OCI-LY7 (cell line): ENCODE measurements at regions of chr11 and their contacts with region 1.

Region 1: DNA sequence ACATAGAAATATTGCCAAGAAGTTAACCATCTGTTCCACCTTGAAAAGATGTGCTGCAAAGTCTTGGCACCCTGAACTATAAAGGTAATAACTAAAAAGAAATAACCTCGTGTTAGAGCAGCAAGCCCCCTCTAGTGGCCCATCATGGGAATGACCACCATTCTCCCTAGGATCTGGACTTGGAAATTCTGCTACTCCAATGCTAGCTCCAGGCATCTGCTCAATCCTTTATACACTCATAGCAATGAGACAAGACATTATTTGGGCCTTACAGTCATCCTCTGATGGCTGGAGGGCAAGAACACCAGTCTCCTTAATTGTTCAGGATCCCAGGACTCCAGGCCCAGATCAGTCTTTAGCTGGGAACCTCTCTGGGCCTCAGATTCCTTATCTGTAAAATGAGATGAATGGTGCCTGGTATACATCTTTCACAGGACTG is 76.0 kb downstream of the CWC15 start:
- DNase-seq: peak; percentile 36
- H3K4me3 ChIP-seq: no peak overlapping the region
- H3K27ac ChIP-seq: no peak overlapping the region
- H3K4me1 ChIP-seq: no peaks in the 10 kb centered on the region
- CTCF ChIP-seq: peak; percentile 90

Region 2: GRCh38 chr11:94519478-94520084 is 377.8 kb before region 1 on chr11:
- CTCF ChIA-PET with region 1: no interaction called
- POLR2A ChIA-PET with region 1: no interaction called
- intact Hi-C with region 1: loop called (anchors 2 kb)
- DNase-seq: peak; percentile 56
- H3K4me3 ChIP-seq: no peak overlapping the region
- H3K27ac ChIP-seq: no peak overlapping the region
- H3K4me1 ChIP-seq: no peaks in the 10 kb centered on the region
- CTCF ChIP-seq: peak; percentile 94

Region 3: GRCh38 chr11:94623120-94623735 is 274.1 kb before region 1 on chr11:
- CTCF ChIA-PET with region 1: no interaction called
- POLR2A ChIA-PET with region 1: no interaction called
- intact Hi-C with region 1: loop called (anchors 1 kb)
- DNase-seq: peak; percentile 63
- H3K4me3 ChIP-seq: no peak overlapping the region
- H3K27ac ChIP-seq: no peak overlapping the region
- H3K4me1 ChIP-seq: no peaks in the 10 kb centered on the region
- CTCF ChIP-seq: peak; percentile 79

Region 4: DNA sequence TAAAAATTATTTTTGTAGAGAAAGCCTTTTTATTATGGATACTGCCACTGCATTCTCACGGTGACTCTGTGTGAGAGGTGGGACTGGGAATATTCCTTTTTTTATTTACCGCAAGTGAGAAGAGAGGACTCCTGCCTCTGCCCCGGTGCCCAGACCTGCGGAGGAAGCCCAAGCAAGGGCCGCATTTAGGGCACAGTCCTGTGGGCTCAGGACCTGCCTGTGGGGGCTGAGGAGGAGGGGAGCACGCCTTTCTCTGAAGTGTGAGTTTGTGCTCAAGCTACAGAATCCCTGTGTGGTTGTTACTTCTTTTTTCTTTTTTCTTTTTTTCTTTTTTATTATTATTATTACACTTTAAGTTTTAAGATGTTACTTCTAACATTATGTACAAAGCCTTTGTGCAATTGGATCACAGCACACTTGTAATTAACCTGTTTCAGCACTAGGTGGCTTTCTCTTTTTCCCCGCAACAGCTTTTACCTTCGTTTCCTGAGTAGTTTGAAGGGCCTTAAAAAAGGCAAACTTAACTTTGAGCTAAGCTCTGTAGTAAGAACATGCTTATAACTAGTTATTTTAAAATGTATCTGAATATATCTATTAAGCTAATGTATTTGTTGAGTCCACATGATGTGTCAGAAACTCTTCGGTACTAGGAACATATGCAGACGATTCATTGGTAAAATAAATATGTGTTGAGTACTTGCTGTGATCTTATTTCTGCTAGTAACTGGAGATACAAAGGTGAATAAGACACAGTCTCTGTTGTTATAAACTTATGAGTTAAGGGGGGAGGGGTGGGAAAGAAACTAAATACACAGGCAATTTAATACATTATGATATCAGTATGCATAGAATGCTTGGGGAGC is 110.9 kb before region 1 on chr11:
- CTCF ChIA-PET with region 1: no interaction called
- POLR2A ChIA-PET with region 1: interaction called, 3 read pairs
- intact Hi-C with region 1: loop called (anchors 5 kb)
- DNase-seq: peak; percentile 20
- H3K4me3 ChIP-seq: no peak overlapping the region
- H3K27ac ChIP-seq: no peak overlapping the region
- H3K4me1 ChIP-seq: no peaks in the 10 kb centered on the region
- CTCF ChIP-seq: peak; percentile 79

Region 5: GRCh38 chr11:94909371-94909820 is 12.0 kb after region 1 on chr11:
- CTCF ChIA-PET with region 1: no interaction called
- POLR2A ChIA-PET with region 1: no interaction called
- intact Hi-C with region 1: no loop called
- DNase-seq: no peak
- H3K4me3 ChIP-seq: no peak overlapping the region
- H3K27ac ChIP-seq: no peak overlapping the region
- H3K4me1 ChIP-seq: no peaks in the 10 kb centered on the region
- CTCF ChIP-seq: no peak

Region 6: DNA sequence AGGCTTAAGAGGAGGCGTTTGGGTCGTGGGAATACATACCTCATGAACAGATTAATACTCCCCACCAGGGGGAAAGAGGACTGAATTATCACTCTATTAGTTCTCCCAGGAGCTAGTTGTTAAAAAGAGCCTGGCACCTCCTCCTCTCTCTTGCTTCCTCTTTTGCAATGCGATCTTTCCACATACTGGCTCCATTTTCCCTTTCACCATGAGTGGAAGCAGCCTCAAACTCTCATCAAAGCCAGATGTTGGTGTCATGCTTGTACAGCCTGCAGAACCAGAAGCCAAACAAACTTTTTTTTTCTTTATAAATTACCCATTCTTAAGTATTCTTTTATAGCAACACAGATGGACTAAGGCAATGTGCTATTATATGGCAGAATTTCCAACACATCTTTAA is 633.8 kb after region 1 on chr11:
- CTCF ChIA-PET with region 1: no interaction called
- POLR2A ChIA-PET with region 1: no interaction called
- intact Hi-C with region 1: no loop called
- DNase-seq: no peak
- H3K4me3 ChIP-seq: no peak overlapping the region
- H3K27ac ChIP-seq: no peak overlapping the region
- H3K4me1 ChIP-seq: no peaks in the 10 kb centered on the region
- CTCF ChIP-seq: no peak